Activated naive CD4-positive, alpha-beta T cell treated with anti-CD3 and anti-CD28 coated beads for 36 hours (primary cell): ENCODE measurements at regions of chr13 and their contacts with region 1.

Region 1: GRCh38 chr13:26872525-26873385 is 112.2 kb upstream of the GPR12 start:
- DNase-seq: peak; percentile 74
- H3K4me3 Mint-ChIP-seq: no peak overlapping the region
- H3K27ac Mint-ChIP-seq: no peak overlapping the region
- H3K4me1 Mint-ChIP-seq: no peaks in the 10 kb centered on the region
- H3K27me3 Mint-ChIP-seq: peaks cover 5% of the 10 kb centered on the region

Region 2: DNA sequence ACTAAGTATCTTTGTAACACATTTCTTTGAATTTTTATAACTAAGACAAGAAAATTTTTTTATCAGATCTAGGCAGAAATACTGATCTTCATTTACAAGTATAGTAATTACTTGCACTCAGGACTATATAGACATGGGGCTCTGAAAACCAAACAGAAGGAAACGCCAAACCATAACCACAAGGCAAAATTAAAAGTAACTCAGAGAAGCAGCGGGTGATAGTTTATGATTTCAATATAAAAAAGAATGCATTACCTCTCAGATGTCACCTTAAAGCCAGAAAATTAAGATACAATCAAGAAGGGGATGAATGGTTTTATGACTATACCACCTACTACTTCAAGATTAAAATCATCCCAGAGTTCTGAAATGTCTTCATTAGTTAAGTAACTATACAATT is 827.6 kb before region 1 on chr13:
- CTCF ChIA-PET with region 1: no interaction called
- intact Hi-C with region 1: no loop called
- DNase-seq: no peak
- H3K4me3 Mint-ChIP-seq: no peak overlapping the region
- H3K27ac Mint-ChIP-seq: no peak overlapping the region
- H3K4me1 Mint-ChIP-seq: peaks cover 23% of the 10 kb centered on the region
- H3K27me3 Mint-ChIP-seq: peaks cover 10% of the 10 kb centered on the region

Region 3: GRCh38 chr13:26132756-26133155 is 740.0 kb before region 1 on chr13:
- CTCF ChIA-PET with region 1: no interaction called
- intact Hi-C with region 1: no loop called
- DNase-seq: no peak
- H3K4me3 Mint-ChIP-seq: no peak overlapping the region
- H3K27ac Mint-ChIP-seq: no peak overlapping the region
- H3K4me1 Mint-ChIP-seq: no peaks in the 10 kb centered on the region
- H3K27me3 Mint-ChIP-seq: peaks cover 11% of the 10 kb centered on the region

Region 4: DNA sequence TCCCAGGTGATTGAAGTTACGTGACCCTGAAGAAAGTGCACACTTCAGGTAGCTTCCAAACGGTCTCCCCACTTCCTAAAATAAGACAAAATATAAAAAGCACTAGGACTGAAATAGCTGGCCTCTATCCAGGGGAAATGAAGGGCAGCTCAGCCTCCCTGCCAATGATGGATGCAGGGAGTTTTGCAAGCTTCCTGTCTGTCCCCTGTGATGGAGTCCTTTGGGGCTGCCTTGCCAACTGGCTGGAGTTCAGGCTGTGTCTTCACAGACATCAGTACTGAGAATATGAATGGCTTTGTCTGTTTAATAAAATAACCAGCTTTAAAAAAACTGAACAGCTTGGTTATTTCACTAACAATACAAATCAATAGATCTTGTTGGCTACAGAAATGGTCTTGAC is 10.8 kb before region 1 on chr13:
- CTCF ChIA-PET with region 1: interaction called, 12 read pairs
- intact Hi-C with region 1: no loop called
- DNase-seq: no peak
- H3K4me3 Mint-ChIP-seq: no peak overlapping the region
- H3K27ac Mint-ChIP-seq: no peak overlapping the region
- H3K4me1 Mint-ChIP-seq: no peaks in the 10 kb centered on the region
- H3K27me3 Mint-ChIP-seq: peaks cover 23% of the 10 kb centered on the region

Region 5: DNA sequence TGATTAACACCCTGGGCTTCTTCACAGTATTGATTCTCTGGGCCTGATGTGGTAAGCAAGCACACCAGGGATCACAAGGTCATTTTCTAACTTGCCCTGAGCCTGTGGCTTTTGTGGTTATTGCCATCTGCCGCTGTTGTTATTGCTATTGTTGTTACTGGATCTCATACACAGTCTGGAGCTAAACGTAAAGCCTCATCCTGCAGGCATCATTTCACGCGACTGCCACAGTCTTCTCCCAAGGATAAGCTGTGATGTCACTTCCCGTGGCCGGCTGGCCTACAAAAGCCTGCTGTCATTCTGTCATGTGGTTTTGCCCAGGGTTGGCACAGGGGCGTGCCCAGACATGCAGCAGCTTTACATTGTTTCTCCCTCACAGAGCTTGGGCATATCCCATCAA is 41.9 kb after region 1 on chr13:
- CTCF ChIA-PET with region 1: no interaction called
- intact Hi-C with region 1: no loop called
- DNase-seq: peak; percentile 40
- H3K4me3 Mint-ChIP-seq: no peak overlapping the region
- H3K27ac Mint-ChIP-seq: peak overlapping the region; percentile 4
- H3K4me1 Mint-ChIP-seq: peaks cover 6% of the 10 kb centered on the region
- H3K27me3 Mint-ChIP-seq: no peaks in the 10 kb centered on the region

Region 6: DNA sequence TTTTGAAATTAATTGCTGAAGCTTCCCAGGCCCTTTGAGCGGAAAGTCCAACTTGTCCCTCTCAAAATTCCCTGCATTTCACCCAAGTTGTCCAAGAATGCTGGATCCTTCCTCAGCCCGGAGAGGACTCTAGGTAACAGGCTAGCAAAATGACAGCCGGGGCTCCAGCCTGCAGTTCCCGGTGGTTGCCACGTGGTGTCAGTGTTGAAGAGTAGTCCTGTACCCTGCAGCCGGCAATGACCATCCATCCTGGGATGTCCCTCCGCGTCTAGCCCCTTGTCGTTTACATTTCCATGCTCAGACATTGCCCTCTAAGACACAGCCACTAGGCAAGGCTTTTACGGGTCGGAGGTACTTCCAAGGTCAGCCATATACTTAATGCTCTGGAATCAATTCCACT is 609.0 kb after region 1 on chr13:
- CTCF ChIA-PET with region 1: no interaction called
- intact Hi-C with region 1: no loop called
- DNase-seq: peak; percentile 63
- H3K4me3 Mint-ChIP-seq: no peak overlapping the region
- H3K27ac Mint-ChIP-seq: no peak overlapping the region
- H3K4me1 Mint-ChIP-seq: peaks cover 5% of the 10 kb centered on the region
- H3K27me3 Mint-ChIP-seq: no peaks in the 10 kb centered on the region